AG04449 (cell line): ENCODE measurements at regions of chr17 and their contacts with region 1.

Region 1: DNA sequence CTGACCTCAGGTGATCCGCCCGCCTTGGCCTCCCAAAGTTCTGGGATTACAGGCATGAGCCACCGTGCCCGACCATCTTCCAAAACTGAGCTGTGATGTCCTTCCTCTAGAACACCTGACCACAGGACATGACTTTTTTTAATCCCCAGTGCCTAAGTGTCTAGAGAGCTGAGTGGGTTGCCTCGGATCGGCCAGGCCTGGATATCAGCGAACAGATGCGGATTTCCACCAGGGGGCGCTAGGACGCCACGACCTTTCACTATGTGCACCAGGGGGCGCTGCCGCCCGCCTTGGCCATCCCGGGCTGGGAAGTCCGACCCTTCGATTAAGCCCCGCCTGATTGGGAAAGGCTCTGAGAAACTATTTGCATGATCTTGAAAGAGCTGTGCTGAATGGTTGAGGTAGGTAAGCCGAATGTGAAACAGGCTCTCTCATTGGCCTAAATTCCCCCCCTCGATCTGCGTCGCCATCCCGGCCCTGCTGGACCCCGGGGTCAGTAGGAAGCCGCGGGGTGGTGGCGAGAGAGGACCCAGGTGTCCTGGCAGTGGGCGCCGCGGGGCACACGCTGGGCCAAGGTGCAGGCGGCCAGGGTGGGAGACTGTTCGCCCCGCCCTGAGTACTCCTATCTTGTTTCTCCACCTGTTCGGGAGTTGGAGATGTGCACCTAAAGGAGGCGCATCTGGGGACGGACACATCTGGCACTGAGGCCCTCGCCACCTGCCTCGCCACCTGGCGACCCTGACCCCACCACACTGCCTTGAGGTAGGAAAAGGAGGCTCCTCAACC is at the start of gene ACBD4:
- DNase-seq: peak; percentile 86
- H3K4me3 ChIP-seq: peak within 1 kb of the TSS; percentile 75
- CTCF ChIP-seq: peak; percentile 100

Region 2: GRCh38 chr17:44919885-44920564 is 215.4 kb before region 1 on chr17:
- CTCF ChIA-PET with region 1: interaction called, 36 read pairs
- POLR2A ChIA-PET with region 1: no interaction called
- DNase-seq: no peak
- H3K4me3 ChIP-seq: no peak overlapping the region
- CTCF ChIP-seq: peak; percentile 94

Region 3: GRCh38 chr17:45087504-45087975 is 47.8 kb before region 1 on chr17:
- CTCF ChIA-PET with region 1: interaction called, 47 read pairs
- POLR2A ChIA-PET with region 1: no interaction called
- DNase-seq: no peak
- H3K4me3 ChIP-seq: no peak overlapping the region
- CTCF ChIP-seq: no peak

Region 4: DNA sequence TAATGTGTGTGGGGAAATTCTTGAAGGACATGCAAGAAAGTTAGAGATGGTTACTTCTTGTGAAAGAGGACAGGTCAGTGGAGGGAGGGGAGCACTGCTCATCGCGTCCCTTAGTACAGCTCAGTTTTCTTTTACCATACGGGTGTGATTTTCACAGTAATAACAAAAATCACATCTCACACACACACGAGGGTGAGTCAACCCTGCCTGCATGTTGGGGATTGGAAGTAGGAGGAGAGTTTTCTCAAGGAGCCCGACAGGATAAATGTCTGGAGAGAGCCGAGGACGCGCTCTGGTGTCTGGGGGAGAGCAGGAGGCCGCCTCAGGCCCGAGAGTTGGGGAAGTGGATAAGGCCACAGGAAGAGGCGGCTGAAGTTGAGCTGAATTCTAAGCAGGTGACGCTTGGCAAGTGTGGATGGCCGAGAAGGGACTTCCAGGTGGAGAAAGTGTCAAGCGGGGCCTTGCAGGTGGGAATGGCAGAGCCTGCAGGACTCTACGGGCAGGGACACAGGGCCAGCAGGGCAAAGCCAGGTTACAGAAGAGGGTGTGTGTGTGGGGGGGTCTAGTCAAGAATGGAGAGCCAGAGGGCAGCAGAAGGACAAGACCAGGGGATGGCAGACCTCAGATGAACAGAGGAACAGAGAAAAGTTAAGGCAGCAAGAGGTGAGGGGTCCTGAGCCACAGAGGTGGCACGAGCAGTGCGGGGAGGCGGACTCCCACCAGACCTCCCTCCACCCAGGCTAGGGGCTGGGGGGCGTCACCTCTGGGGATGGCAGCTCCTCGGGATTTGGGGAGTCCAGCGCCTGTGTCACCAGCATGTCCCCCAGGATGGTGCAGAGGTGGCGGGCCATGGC is 19.3 kb before region 1 on chr17:
- CTCF ChIA-PET with region 1: interaction called, 34 read pairs
- POLR2A ChIA-PET with region 1: no interaction called
- DNase-seq: no peak
- H3K4me3 ChIP-seq: no peak overlapping the region
- CTCF ChIP-seq: no peak

Region 5: GRCh38 chr17:45172454-45173286 is 37.3 kb after region 1 on chr17:
- CTCF ChIA-PET with region 1: interaction called, 44 read pairs
- POLR2A ChIA-PET with region 1: interaction called, 3 read pairs
- DNase-seq: no peak
- H3K4me3 ChIP-seq: peak overlapping the region; percentile 30
- CTCF ChIP-seq: no peak

Region 6: GRCh38 chr17:45235416-45236281 is 100.3 kb after region 1 on chr17:
- CTCF ChIA-PET with region 1: interaction called, 63 read pairs
- POLR2A ChIA-PET with region 1: no interaction called
- DNase-seq: peak; percentile 9
- H3K4me3 ChIP-seq: no peak overlapping the region
- CTCF ChIP-seq: peak; percentile 87